ENCODE measurements at regions of chr6 and their contacts with region 1.

Region 1: GRCh38 chr6:26156076-26156849 is 69.0 kb downstream of the HFE start:
- DNase-seq: peak; percentile 73 to 96 (median 88)
- ATAC-seq: peak; percentile 48 to 58
- H3K4me3 Mint-ChIP-seq: peak overlapping the region; percentile 89 to 99 (median 96)
- H3K27ac Mint-ChIP-seq: peak overlapping the region; percentile 92 to 100 (median 98)
- H3K4me1 Mint-ChIP-seq: peaks cover 24 to 44% (median 39%) of the 10 kb centered on the region in 4 donors
- H3K27me3 Mint-ChIP-seq: no peaks in the 10 kb centered on the region

Region 2: DNA sequence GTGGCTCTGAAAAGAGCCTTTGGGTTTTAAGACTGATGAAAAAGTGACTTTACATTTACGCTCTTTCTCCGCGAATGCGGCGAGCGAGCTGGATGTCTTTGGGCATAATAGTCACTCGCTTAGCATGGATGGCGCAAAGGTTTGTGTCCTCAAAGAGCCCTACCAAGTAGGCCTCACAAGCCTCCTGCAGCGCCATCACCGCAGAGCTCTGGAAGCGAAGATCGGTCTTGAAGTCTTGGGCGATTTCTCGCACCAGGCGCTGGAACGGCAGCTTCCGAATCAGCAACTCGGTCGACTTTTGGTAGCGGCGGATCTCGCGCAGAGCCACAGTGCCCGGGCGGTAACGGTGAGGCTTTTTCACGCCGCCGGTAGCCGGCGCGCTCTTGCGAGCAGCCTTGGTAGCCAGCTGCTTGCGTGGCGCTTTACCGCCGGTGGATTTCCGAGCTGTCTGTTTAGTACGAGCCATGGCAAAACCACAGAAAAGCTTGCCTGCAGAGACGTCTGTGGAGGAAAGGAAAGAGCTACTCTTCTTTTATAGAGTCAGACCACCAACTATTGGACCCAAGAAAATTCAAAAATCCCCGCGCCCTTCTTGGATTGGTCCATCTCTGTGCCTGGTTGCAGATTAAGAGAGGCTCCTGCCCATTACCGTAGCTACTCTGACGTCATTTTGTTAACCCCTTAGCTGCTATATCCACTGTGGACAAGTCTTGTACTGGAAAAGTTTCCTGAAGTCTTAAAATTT is 124.5 kb before region 1 on chr6:
- POLR2A ChIA-PET with region 1: interaction called, 170 read pairs
- DNase-seq: peak; percentile 71 to 96 (median 91)
- ATAC-seq: peak; percentile 67 to 71
- H3K4me3 Mint-ChIP-seq: peak overlapping the region; percentile 94 to 97 (median 95)
- H3K27ac Mint-ChIP-seq: peak overlapping the region; percentile 93 to 99 (median 96)
- H3K4me1 Mint-ChIP-seq: peaks cover 11 to 52% (median 41%) of the 10 kb centered on the region in 4 donors
- H3K27me3 Mint-ChIP-seq: peaks cover 0 to 2% (median 0%) of the 10 kb centered on the region in 5 donors

Region 3: DNA sequence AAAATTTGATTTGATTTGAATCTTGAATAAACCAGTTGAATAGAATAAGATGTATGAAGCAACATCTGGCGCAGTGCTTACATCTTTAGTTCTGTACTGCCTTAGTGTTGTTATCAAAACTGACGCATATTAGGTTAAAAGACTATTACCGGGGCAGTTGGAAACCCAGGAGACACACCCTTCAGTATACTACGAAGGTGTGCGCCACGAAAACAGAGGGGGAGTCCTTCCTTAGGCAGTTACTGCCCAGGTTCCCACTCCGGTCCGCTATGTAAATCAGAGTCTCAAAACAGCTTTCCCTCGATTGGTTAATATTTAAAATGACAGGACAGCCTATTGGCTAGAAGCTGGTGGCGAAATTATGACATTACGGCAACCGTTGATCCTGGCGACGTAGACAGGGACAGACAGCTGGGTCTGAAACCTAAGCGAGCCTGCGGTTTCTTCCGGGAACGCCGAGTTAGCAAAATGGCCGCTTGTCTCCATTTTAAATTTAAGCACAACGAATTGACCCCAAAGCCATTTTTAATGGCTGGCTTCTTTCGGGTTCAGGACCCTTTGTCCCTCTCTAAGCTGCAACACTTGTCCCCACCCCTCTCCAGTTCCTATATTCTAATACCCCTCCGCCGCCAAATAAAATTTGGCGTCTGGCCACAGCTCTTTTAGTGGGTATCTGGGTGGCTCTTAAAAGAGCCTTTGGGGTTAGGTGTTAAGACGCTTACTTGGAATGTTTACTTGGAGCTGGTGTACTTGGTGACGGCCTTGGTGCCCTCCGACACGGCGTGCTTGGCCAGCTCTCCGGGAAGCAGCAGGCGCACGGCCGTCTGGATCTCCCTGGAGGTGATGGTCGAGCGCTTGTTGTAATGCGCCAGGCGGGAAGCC is 33.2 kb before region 1 on chr6:
- POLR2A ChIA-PET with region 1: interaction called, 1,613 read pairs
- DNase-seq: peak; percentile 76 to 99 (median 94)
- ATAC-seq: peak; percentile 59 to 63
- H3K4me3 Mint-ChIP-seq: peak overlapping the region; percentile 93 to 100 (median 98)
- H3K27ac Mint-ChIP-seq: peak overlapping the region; percentile 96 to 100 (median 98)
- H3K4me1 Mint-ChIP-seq: peaks cover 24 to 43% (median 33%) of the 10 kb centered on the region in 4 donors
- H3K27me3 Mint-ChIP-seq: peaks cover 0 to 4% (median 0%) of the 10 kb centered on the region in 5 donors

Region 4: GRCh38 chr6:26196846-26197648 is 40.8 kb after region 1 on chr6:
- POLR2A ChIA-PET with region 1: interaction called, 616 read pairs
- DNase-seq: peak; percentile 55 to 95 (median 86)
- ATAC-seq: peak; percentile 57 to 62
- H3K4me3 Mint-ChIP-seq: peak overlapping the region; percentile 88 to 99 (median 96)
- H3K27ac Mint-ChIP-seq: peak overlapping the region; percentile 94 to 99 (median 98)
- H3K4me1 Mint-ChIP-seq: peaks cover 25 to 46% (median 42%) of the 10 kb centered on the region in 4 donors
- H3K27me3 Mint-ChIP-seq: no peaks in the 10 kb centered on the region

Region 5: DNA sequence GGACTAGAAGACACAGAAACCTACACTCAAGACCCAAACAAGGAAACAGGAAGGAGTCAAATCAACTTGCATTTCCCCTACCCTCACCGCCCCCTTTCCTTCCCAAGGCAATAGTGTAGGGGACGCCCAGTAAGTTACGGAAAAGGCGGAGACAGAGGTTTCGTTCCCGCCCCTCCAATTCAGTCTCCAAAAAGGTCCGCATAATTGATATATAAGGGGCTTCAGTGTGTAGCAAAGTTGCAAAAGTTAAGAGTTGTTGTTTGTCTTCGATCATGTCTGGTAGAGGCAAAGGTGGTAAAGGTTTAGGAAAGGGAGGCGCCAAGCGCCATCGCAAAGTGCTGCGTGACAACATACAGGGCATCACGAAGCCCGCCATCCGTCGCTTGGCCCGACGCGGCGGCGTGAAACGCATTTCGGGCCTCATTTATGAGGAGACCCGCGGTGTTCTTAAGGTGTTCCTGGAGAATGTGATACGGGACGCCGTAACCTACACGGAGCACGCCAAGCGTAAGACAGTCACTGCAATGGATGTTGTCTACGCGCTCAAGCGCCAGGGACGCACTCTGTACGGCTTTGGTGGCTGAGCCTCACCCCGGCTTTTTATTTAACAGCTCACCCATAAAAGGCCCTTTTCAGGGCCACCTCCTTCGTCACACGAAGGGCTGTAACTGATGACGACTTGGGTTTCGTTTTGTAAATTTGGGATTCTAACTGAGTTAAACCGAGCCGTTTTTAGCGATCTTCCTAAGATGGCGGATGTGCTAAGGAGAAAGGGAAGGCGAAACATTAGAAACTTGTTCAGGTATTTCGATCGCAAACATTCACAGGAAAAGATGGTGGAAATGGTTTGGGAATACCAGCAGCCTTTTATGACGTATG is 84.1 kb after region 1 on chr6:
- POLR2A ChIA-PET with region 1: interaction called, 167 read pairs
- DNase-seq: peak; percentile 39 to 90 (median 80)
- ATAC-seq: peak; percentile 82 to 85
- H3K4me3 Mint-ChIP-seq: peak overlapping the region; percentile 82 to 95 (median 88)
- H3K27ac Mint-ChIP-seq: peak overlapping the region; percentile 92 to 99 (median 98)
- H3K4me1 Mint-ChIP-seq: peaks cover 9 to 25% (median 22%) of the 10 kb centered on the region in 4 donors
- H3K27me3 Mint-ChIP-seq: no peaks in the 10 kb centered on the region

Region 6: GRCh38 chr6:27809939-27810767 is 1653.9 kb after region 1 on chr6:
- POLR2A ChIA-PET with region 1: interaction called, 25 read pairs
- DNase-seq: peak; percentile 58 to 95 (median 84)
- ATAC-seq: peak; percentile 63 to 65
- H3K4me3 Mint-ChIP-seq: peak overlapping the region; percentile 90 to 97 (median 96)
- H3K27ac Mint-ChIP-seq: peak overlapping the region; percentile 97 to 99 (median 98)
- H3K4me1 Mint-ChIP-seq: peaks cover 32 to 72% (median 47%) of the 10 kb centered on the region in 4 donors
- H3K27me3 Mint-ChIP-seq: no peaks in the 10 kb centered on the region

Measured in naive thymus-derived CD8-positive, alpha-beta T cell (primary cell).